ENCODE measurements at regions of chr12 and their contacts with region 1.

Region 1: DNA sequence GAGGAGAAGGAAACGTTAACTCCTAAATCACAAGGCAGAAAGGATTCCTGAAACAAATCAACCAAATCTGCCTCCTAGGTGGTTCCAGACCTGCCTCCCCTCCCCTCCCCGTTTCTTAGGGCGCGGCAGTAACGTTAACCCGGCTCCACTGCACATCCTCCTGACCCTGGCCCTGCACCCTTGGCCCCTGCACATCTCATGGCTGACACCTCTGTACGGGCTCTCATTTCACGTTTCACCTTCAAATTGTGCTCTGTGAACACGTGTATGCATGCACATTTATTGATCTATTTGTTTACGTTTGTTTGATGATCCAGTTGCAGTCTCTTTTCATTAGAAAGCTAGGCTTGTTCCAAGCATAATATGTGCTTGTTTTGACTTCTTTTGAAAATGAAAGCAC is 358.1 kb downstream of the ADGRD1 start:
- DNase-seq: no peak
- ATAC-seq: no peak
- H3K4me3 ChIP-seq: peak overlapping the region in 1 of 4 donors; percentile 31
- H3K27ac ChIP-seq: no peak overlapping the region
- H3K4me1 ChIP-seq: no peaks in the 10 kb centered on the region
- H3K27me3 ChIP-seq: peaks cover 0 to 8% (median 3%) of the 10 kb centered on the region in 3 donors
- CTCF ChIP-seq: no peak
- POLR2A ChIP-seq: no peak

Region 2: DNA sequence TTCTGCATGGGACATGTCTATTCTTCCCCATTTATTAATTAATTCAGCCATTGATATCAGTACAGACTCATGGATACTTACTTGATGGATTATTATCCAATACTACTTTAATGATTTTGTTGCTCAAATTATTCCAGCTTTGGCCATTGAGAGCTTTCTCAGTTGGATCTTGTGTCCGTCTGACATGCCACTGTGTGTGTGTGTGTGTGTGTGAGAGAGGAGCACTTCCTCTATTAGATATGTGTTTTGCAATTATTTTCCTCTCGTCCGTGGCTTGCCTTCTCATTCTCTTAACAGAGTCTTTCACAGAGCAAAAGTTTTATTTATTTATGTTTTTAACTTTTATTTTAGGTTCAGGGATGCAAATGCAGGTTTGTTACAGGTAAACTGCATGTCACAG is 163.9 kb before region 1 on chr12:
- in situ Hi-C with region 1: no loop called
- intact Hi-C with region 1: no loop called
- DNase-seq: no peak
- ATAC-seq: no peak
- H3K4me3 ChIP-seq: no peak overlapping the region
- H3K27ac ChIP-seq: no peak overlapping the region
- H3K4me1 ChIP-seq: no peaks in the 10 kb centered on the region
- H3K27me3 ChIP-seq: no peaks in the 10 kb centered on the region
- CTCF ChIP-seq: no peak
- POLR2A ChIP-seq: no peak

Region 3: DNA sequence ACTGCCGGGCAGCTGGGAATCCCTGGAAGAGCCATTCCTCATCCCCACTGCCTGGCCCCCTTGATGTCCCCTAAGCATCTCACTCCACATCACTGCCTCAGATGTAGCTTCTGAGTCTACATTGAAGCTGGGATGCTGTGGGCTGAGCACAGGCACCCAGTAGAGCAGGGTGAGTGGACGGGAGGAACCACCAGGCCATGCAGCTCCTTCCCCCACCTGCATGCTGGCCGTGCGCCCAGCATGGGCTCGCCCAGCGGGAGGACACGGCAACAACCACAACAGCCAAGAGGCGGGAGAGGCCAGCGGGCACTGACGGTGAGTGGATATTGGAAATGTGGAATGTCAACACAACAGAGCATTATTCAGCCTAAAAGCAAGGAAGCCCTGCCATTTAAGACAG is 47.1 kb before region 1 on chr12:
- in situ Hi-C with region 1: no loop called
- intact Hi-C with region 1: no loop called
- DNase-seq: no peak
- ATAC-seq: no peak
- H3K4me3 ChIP-seq: no peak overlapping the region
- H3K27ac ChIP-seq: no peak overlapping the region
- H3K4me1 ChIP-seq: peaks cover 0 to 6% of the 10 kb centered on the region in 2 donors
- H3K27me3 ChIP-seq: no peaks in the 10 kb centered on the region
- CTCF ChIP-seq: no peak
- POLR2A ChIP-seq: no peak

Region 4: DNA sequence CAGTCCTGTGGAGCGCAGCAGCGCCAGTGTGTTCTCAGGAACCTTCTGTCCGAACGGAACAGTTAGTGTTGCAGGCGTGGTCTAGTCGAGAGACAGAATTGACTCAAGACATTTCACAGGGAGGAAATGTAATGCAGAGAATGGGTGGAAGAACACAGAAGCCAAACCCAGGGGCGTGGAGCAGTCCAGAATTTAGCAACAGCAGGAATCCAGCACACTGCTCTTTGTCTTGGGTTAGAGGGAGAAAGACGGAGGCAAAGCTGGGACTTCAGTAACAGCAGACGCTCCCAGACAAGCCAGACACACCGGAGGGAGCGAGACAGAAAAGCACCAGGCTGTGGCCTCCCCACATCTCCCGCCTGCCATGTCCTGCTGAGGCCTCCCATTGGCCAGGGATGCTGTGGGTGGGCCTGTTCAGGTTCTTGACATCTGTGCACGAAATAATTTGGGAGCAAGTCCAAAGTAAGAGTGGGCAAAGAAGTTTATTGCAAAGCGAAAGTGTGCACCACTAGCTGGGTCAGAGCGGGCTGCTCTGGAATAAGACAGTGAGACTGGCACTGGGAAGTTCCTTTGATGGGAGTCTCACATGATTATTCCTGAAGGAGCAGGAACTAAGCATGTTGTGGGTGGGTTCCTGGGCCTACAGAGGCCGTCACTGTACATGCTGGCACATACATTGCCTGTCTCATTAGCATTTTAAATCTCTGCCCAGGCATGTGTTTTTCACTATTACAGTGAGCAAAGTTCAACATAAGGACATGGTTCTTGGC is 59.8 kb after region 1 on chr12:
- in situ Hi-C with region 1: no loop called
- intact Hi-C with region 1: no loop called
- DNase-seq: no peak
- ATAC-seq: no peak
- H3K4me3 ChIP-seq: no peak overlapping the region
- H3K27ac ChIP-seq: no peak overlapping the region
- H3K4me1 ChIP-seq: no peaks in the 10 kb centered on the region
- H3K27me3 ChIP-seq: no peaks in the 10 kb centered on the region
- CTCF ChIP-seq: no peak
- POLR2A ChIP-seq: no peak

Region 5: DNA sequence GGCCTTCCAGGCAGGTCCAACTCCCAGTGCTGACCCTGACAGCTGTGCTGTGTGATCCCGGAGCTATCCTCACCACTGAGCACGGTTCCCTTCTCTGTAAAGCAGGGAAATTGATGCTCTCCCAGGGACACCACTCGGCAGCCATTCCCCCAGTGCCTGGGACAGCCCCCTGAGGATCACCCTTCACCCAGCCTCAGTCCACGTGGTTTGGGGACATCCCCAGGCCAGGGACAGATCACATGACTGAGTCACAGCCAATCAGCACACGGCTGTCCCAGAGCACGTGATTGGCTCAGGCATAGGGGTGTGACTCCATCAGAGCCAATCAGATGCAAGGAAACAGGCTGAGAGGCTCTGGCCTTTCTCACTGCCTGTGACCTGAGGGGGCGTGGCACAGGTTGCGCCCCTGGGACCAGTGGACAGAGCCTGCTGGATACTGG is 330.4 kb after region 1 on chr12:
- in situ Hi-C with region 1: loop called in 1 of 4 experiments (anchors 25 kb)
- intact Hi-C with region 1: no loop called
- DNase-seq: no peak
- ATAC-seq: no peak
- H3K4me3 ChIP-seq: no peak overlapping the region
- H3K27ac ChIP-seq: no peak overlapping the region
- H3K4me1 ChIP-seq: no peaks in the 10 kb centered on the region
- H3K27me3 ChIP-seq: peaks cover 0 to 3% (median 0%) of the 10 kb centered on the region in 3 donors
- CTCF ChIP-seq: no peak
- POLR2A ChIP-seq: no peak

Measured in gastrocnemius medialis (tissue), 4 donors.